WTC11 (cell line): ENCODE measurements at regions of chr19 and their contacts with region 1.

Region 1: GRCh38 chr19:18117692-18118378 is 20.3 kb downstream of the MAST3 start:
- DNase-seq: peak; percentile 96
- ATAC-seq: peak; percentile 78
- H3K4me3 Mint-ChIP-seq: peak overlapping the region; percentile 81
- H3K27ac Mint-ChIP-seq: peak overlapping the region; percentile 83; the same call in 1 of the 2 replicates
- H3K4me1 Mint-ChIP-seq: peaks cover 28% of the 10 kb centered on the region
- H3K27me3 Mint-ChIP-seq: peaks cover 9% of the 10 kb centered on the region
- CTCF ChIP-seq: no peak

Region 2: GRCh38 chr19:18058208-18059030 is 59.4 kb before region 1 on chr19:
- CTCF ChIA-PET with region 1: interaction called, 11 read pairs
- POLR2A ChIA-PET with region 1: no interaction called
- DNase-seq: peak; percentile 86
- ATAC-seq: peak; percentile 86
- H3K4me3 Mint-ChIP-seq: peak overlapping the region; percentile 61
- H3K27ac Mint-ChIP-seq: peak overlapping the region; percentile 63; the same call in 1 of the 2 replicates
- H3K4me1 Mint-ChIP-seq: peaks cover 7% of the 10 kb centered on the region
- H3K27me3 Mint-ChIP-seq: no peaks in the 10 kb centered on the region; the same call in 1 of the 2 replicates
- CTCF ChIP-seq: peak; percentile 92

Region 3: DNA sequence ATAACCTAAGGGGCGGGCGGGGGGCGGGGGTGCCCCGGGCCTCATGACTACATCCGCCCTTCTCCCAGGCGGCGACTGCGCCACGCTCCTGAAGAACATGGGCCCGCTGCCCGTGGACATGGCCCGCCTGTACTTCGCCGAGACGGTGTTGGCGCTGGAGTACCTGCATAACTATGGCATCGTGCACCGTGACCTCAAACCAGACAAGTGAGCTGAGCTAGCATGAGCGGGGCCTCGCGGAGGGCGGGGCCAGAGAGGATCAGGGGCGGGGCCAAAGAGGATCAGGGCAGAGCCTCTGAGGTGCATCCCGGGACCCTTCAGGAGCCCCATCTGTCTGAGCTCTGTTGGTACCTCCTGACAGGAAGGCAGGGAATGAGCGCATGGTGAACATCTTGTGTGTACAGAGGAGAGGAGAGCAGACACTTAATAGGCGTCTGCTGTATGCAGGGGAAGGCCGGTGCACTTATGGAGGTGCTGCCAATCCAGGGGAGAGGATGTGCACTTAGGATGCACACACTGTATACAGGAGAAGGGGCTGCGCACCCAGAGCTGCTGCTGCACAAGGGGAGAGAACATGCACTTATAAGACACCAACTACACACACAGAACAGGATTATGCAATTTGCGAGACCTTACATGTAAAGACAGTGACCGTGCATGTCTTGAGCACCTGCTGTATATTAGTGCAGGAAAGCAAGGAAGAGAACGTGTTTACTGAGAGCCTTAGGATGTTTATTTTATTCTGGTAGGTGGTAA is 14.2 kb after region 1 on chr19:
- CTCF ChIA-PET with region 1: interaction called, 11 read pairs
- POLR2A ChIA-PET with region 1: no interaction called
- DNase-seq: peak; percentile 84
- ATAC-seq: peak; percentile 96
- H3K4me3 Mint-ChIP-seq: no peak overlapping the region
- H3K27ac Mint-ChIP-seq: peak overlapping the region; percentile 42; the same call in 1 of the 2 replicates
- H3K4me1 Mint-ChIP-seq: no peaks in the 10 kb centered on the region
- H3K27me3 Mint-ChIP-seq: no peaks in the 10 kb centered on the region
- CTCF ChIP-seq: no peak

Region 4: GRCh38 chr19:18160971-18161635 is 43.3 kb after region 1 on chr19:
- CTCF ChIA-PET with region 1: interaction called, 40 read pairs
- POLR2A ChIA-PET with region 1: no interaction called
- DNase-seq: peak; percentile 77
- ATAC-seq: peak; percentile 84
- H3K4me3 Mint-ChIP-seq: peak overlapping the region; percentile 42
- H3K27ac Mint-ChIP-seq: no peak overlapping the region
- H3K4me1 Mint-ChIP-seq: peaks cover 15% of the 10 kb centered on the region
- H3K27me3 Mint-ChIP-seq: no peaks in the 10 kb centered on the region
- CTCF ChIP-seq: peak; percentile 64; the same call in 1 of the 2 replicates

Region 5: GRCh38 chr19:18192673-18193387 is 75.0 kb after region 1 on chr19 and contains the start of gene MPV17L2:
- CTCF ChIA-PET with region 1: interaction called, 33 read pairs
- POLR2A ChIA-PET with region 1: interaction called, 4 read pairs
- DNase-seq: peak; percentile 99
- ATAC-seq: peak; percentile 94
- H3K4me3 Mint-ChIP-seq: peak within 1 kb of the TSS; percentile 82
- H3K27ac Mint-ChIP-seq: peak within 1 kb of the TSS; percentile 97
- H3K4me1 Mint-ChIP-seq: peaks cover 20% of the 10 kb centered on the region
- H3K27me3 Mint-ChIP-seq: peaks cover 2% of the 10 kb centered on the region; the same call in 1 of the 2 replicates
- CTCF ChIP-seq: no peak
- total RNA-seq, gene MPV17L2: 26.3 to 29.8 TPM (median 28.0 TPM) in 3 replicates

Region 6: GRCh38 chr19:18233224-18233825 is 115.5 kb after region 1 on chr19:
- CTCF ChIA-PET with region 1: interaction called, 20 read pairs
- POLR2A ChIA-PET with region 1: no interaction called
- DNase-seq: peak; percentile 93
- ATAC-seq: peak; percentile 79
- H3K4me3 Mint-ChIP-seq: peak overlapping the region; percentile 78
- H3K27ac Mint-ChIP-seq: no peak overlapping the region
- H3K4me1 Mint-ChIP-seq: peaks cover 31% of the 10 kb centered on the region
- H3K27me3 Mint-ChIP-seq: peaks cover 12% of the 10 kb centered on the region
- CTCF ChIP-seq: no peak

Region 7: DNA sequence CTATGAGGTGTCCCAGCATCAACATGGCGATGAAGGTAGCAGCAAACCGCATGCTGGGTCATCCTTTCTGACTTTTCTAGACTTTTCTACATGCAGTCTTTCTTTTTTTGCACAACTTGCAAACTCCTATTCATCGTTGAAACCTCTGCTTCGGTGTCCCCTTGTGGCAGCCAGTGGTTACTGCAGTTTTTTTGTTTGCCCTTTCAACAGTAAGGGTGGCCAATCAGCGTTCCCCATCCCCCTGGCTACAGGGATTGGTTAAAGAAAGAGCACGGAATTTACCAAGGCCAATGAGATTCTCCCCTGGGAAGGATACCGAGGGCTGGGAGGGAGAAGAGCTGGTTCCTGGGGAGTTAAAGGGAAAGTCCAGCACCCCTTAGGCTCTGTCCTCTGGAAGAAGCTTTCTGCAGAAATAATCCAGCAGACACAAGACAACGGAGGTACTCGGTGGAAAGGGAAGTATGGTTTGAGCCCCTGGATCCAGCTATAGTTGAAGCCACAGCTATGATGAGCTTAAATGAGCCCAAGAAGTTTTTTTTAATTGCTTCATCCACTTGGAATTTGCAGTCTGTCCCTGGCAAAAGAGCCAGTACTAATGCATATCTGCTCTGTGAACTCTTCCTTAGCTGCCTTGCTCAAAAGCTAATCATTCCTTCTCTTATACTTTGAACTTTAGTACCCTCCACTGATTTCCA is 210.7 kb after region 1 on chr19:
- CTCF ChIA-PET with region 1: interaction called, 11 read pairs
- POLR2A ChIA-PET with region 1: no interaction called
- DNase-seq: peak; percentile 91
- ATAC-seq: peak; percentile 99
- H3K4me3 Mint-ChIP-seq: peak overlapping the region; percentile 70
- H3K27ac Mint-ChIP-seq: peak overlapping the region; percentile 89
- H3K4me1 Mint-ChIP-seq: peaks cover 19% of the 10 kb centered on the region
- H3K27me3 Mint-ChIP-seq: no peaks in the 10 kb centered on the region; the same call in none of the 2 replicates
- CTCF ChIP-seq: peak; percentile 86